ENCODE measurements at regions of chr14 and their contacts with region 1.

Region 1: DNA sequence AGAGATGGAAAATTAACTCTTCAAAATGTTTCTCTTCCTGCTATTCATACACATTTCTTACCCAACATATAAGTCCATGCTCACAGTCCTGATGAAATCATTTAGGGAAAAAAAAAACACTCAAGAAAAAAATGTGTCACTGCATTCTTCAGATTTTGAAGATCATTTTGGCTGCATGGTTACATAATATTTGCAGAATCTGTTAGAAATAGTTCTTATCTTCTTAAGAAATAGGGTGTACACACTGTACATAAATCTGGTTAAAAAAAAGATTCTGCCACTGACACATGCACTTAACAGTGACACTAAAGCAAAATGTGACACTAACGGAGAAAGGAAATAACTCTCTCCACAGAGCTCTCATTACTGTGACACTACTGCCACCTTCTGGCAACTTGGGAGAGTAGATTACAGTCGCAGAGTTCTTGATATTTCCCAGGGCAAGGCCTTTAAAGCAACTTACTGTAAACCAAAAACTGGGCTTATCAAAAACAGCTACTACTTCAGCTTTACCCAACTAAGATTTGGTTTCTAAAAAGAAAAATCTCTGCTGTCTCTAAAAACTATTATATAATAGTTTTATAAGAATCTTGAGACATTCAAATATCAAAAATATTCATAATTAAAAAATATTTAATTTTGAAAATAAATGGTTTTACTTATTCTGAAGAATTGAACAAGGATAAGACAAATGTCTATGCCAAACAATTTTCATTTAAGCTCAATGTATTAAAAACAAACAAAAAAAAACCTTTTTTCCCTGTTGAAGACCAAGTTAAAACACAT is 65.0 kb downstream of the SETD3 start:
- DNase-seq: peak; percentile 84
- H3K4me3 ChIP-seq: no peak overlapping the region
- H3K27ac ChIP-seq: no peak overlapping the region
- H3K4me1 ChIP-seq: peaks cover 4% of the 10 kb centered on the region
- CTCF ChIP-seq: peak; percentile 97

Region 2: DNA sequence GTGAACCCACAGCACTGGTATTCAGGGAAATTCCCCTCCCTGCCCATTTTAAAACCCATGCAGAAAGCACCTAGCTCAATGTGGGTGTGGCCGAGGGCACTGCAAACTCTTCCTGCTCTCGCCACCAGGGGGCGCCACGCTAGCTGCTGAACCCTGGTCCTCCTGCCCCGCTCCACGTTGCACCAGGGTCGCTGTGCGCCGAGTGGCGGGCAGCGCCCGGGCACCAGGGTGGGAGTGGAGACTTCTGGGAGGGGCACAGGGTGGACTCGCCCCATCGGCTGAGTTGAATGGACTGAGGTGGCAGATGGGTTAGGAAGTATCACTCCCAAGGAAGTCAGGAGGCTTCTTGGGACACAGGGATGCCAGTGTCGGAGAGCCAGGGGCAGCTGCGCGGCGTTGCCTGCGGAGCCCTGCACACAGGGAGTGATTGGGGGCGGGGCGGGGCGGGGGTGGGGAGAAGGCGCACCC is 95.5 kb before region 1 on chr14:
- CTCF ChIA-PET with region 1: no interaction called
- POLR2A ChIA-PET with region 1: no interaction called
- intact Hi-C with region 1: loop called (anchors 1 kb)
- DNase-seq: peak; percentile 51
- H3K4me3 ChIP-seq: no peak overlapping the region
- H3K27ac ChIP-seq: no peak overlapping the region
- H3K4me1 ChIP-seq: no peaks in the 10 kb centered on the region
- CTCF ChIP-seq: peak; percentile 90

Region 3: DNA sequence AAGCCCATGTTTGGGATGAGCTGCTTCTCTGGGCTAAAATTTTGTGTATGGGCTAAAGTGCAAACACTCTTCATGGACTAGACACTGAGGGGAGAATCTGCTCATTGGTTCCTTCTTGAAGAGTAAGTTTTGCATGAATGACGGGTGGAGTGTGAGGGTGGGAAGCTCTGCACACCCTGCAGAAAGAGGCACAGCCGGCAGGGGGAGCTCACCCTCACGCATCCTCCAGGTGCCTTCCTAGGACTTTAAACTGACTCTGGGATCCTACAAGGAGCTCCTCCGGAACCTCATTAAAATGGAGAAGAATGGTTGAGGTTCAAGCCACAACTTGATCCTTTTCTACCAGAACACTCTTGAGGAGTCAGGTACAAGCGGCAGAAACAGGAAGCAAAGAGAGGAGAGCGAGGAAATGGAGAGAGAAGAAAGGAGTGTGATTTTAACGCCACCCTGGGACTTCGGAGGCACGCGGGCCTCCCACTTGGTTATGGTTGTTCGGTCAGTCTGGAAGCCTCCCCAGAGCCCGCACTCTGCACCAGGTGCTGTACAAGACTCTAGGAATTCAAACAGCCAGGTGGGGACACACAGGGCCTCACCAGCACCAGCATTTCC is 22.5 kb before region 1 on chr14:
- CTCF ChIA-PET with region 1: interaction called, 15 read pairs
- POLR2A ChIA-PET with region 1: interaction called, 4 read pairs
- intact Hi-C with region 1: loop called (anchors 1 kb)
- DNase-seq: peak; percentile 56
- H3K4me3 ChIP-seq: no peak overlapping the region
- H3K27ac ChIP-seq: no peak overlapping the region
- H3K4me1 ChIP-seq: no peaks in the 10 kb centered on the region
- CTCF ChIP-seq: peak; percentile 92

Region 4: GRCh38 chr14:99427632-99428300 is 12.1 kb after region 1 on chr14:
- CTCF ChIA-PET with region 1: interaction called, 4 read pairs
- POLR2A ChIA-PET with region 1: interaction called, 11 read pairs
- intact Hi-C with region 1: no loop called
- DNase-seq: no peak
- H3K4me3 ChIP-seq: no peak overlapping the region
- H3K27ac ChIP-seq: no peak overlapping the region
- H3K4me1 ChIP-seq: peaks cover 82% of the 10 kb centered on the region
- CTCF ChIP-seq: no peak